ENCODE measurements at regions of chrX and their contacts with region 1.

Region 1: DNA sequence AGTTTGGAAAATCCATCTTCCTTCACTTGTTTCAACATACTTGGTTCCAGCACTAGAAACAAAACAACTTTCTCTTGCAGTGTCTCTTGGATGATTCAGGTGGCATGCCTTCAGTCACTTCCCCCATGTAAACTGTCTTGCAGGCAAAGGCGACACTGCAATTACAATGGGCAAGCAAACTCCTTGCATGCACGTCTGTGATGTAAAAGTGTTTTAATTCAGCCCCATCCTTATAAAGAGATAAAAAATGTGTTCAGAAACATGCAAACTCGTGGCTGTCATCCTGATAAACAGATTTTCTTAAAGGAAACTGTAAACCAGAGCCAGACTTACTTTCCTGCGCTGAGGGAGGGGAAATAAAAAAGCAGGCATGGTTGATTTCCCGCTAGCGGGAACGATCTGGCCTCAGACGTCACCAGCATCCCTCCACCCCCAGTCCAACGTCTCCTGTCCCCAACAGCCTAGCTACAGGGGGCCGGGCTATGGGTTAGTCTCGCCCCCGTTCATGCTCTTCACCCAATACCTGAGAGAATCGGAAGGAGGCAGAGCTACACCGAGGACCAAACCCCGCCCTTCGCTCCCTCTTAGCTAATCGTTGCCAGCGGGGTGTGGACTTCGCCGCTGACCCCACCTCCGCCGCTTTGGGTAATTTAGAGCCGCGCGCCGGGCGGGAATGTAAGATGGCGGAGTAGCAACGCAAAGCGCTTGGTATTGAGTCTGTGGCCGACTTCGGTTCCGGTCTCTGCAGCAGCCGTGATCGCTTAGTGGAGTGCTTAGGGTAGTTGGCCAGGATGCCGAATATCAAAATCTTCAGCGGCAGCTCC is at the start of gene PRPS1:
- DNase-seq: peak; percentile 87
- ATAC-seq: peak; percentile 98
- H3K4me3 ChIP-seq: peak within 1 kb of the TSS; percentile 90 to 97
- H3K27ac ChIP-seq: peak within 1 kb of the TSS; percentile 93
- H3K4me1 ChIP-seq: peaks cover 33% of the 10 kb centered on the region
- H3K27me3 ChIP-seq: no peaks in the 10 kb centered on the region
- CTCF ChIP-seq: no peak
- total RNA-seq, gene PRPS1: 152 TPM

Region 2: GRCh38 chrX:107025545-107025944 is 602.5 kb before region 1 on chrX:
- CTCF ChIA-PET with region 1: no interaction called
- POLR2A ChIA-PET with region 1: no interaction called
- in situ Hi-C with region 1: no loop called
- intact Hi-C with region 1: loop called (anchors 10 kb)
- DNase-seq: peak; percentile 28
- ATAC-seq: peak; percentile 83
- H3K4me3 ChIP-seq: no peak overlapping the region
- H3K27ac ChIP-seq: no peak overlapping the region
- H3K4me1 ChIP-seq: no peaks in the 10 kb centered on the region
- H3K27me3 ChIP-seq: no peaks in the 10 kb centered on the region
- CTCF ChIP-seq: peak; percentile 75

Region 3: GRCh38 chrX:107199491-107199890 is 428.6 kb before region 1 on chrX:
- CTCF ChIA-PET with region 1: no interaction called
- POLR2A ChIA-PET with region 1: no interaction called
- in situ Hi-C with region 1: no loop called
- intact Hi-C with region 1: no loop called
- DNase-seq: no peak
- ATAC-seq: no peak
- H3K4me3 ChIP-seq: no peak overlapping the region
- H3K27ac ChIP-seq: no peak overlapping the region
- H3K4me1 ChIP-seq: no peaks in the 10 kb centered on the region
- H3K27me3 ChIP-seq: no peaks in the 10 kb centered on the region
- CTCF ChIP-seq: no peak

Region 4: DNA sequence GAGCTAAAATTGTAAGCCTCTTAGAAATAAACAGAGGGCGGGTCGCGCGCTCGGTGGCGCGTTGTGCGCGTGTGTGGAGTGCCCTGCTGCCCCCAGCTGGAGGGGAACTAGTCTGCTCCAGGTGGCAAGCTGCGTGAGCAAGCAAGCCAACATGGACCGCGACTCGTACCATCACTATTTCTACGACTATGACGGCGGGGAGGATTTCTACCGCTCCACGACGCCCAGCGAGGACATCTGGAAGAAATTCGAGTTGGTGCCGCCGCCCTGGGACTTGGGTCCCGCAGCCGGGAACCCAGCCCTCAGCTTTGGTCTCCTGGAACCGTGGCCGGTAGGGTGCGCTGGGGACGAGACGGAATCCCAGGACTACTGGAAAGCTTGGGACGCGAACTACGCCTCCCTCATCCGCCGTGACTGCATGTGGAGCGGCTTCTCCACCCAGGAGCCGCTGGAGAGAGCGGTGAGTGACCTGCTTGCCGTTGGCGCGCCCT is 355.6 kb before region 1 on chrX:
- CTCF ChIA-PET with region 1: no interaction called
- POLR2A ChIA-PET with region 1: interaction called, 12 read pairs
- in situ Hi-C with region 1: no loop called
- intact Hi-C with region 1: no loop called
- DNase-seq: no peak
- ATAC-seq: peak; percentile 90
- H3K4me3 ChIP-seq: peak overlapping the region; percentile 16 to 42
- H3K27ac ChIP-seq: no peak overlapping the region
- H3K4me1 ChIP-seq: no peaks in the 10 kb centered on the region
- H3K27me3 ChIP-seq: no peaks in the 10 kb centered on the region
- CTCF ChIP-seq: peak; percentile 74

Region 5: DNA sequence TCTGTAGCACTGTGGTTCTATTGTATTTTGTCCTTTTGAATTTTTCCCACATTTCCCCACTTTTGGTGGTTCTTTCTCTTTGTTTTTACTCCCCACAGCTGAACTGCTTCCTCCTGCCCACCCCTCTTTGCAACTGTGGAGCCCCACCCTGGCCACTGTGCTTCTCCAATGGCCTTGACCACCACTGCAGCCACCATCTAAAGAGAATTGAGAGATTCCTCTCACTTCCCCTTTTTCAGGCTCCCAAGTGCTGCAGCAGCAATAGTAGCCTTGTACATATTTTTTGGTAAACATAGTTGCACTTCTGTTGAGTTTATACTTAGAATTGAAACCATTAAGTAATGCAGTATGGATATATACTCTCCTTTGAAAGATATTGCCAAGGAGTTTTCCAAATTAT is 229.9 kb before region 1 on chrX:
- CTCF ChIA-PET with region 1: no interaction called
- POLR2A ChIA-PET with region 1: interaction called, 13 read pairs
- in situ Hi-C with region 1: no loop called
- intact Hi-C with region 1: no loop called
- DNase-seq: no peak
- ATAC-seq: no peak
- H3K4me3 ChIP-seq: no peak overlapping the region
- H3K27ac ChIP-seq: no peak overlapping the region
- H3K4me1 ChIP-seq: no peaks in the 10 kb centered on the region
- H3K27me3 ChIP-seq: no peaks in the 10 kb centered on the region
- CTCF ChIP-seq: no peak

Region 6: DNA sequence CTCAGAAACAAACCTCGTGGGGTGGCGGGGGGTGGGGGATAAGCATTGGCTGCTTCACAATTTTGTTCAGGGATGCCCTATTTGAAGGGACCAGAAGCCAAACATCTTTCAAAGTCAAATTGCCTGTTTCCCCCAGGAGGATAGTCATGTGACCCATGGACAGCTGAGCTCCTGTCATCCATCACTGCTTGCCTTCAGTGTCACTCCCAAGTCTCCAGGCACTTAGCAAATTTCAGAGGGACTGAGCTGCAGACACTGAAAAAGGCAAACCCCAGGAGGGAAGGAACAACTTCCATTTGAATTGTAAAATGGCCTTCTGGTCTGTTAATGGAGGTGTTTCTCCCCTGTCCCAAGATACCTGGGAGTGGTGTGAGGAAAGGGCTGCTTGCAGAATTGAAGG is 105.1 kb before region 1 on chrX:
- CTCF ChIA-PET with region 1: no interaction called
- POLR2A ChIA-PET with region 1: no interaction called
- in situ Hi-C with region 1: no loop called
- intact Hi-C with region 1: no loop called
- DNase-seq: no peak
- ATAC-seq: no peak
- H3K4me3 ChIP-seq: no peak overlapping the region
- H3K27ac ChIP-seq: no peak overlapping the region
- H3K4me1 ChIP-seq: no peaks in the 10 kb centered on the region
- H3K27me3 ChIP-seq: no peaks in the 10 kb centered on the region
- CTCF ChIP-seq: no peak

Region 7: DNA sequence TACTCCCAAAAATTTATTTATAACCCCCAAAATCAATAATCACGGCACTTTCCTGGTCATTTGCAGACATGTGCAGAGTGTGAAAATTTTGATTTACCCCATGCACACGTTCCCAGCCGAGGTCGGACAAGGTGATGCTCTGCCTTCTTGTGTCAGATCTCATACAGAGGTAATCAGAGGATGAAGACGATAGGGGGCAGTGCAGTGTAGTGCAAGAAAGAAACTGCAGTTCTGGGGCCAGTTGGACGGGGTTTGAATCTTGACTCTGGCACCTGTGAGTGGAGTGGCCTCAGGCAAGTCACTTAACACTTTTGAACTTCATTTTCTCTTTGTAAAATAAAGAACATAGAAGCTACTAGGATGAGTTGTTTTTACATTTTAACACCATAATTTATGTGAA is 90.2 kb before region 1 on chrX:
- CTCF ChIA-PET with region 1: interaction called, 9 read pairs
- POLR2A ChIA-PET with region 1: interaction called, 6 read pairs
- in situ Hi-C with region 1: no loop called
- intact Hi-C with region 1: loop called (anchors 5 kb)
- DNase-seq: peak; percentile 41
- ATAC-seq: peak; percentile 89
- H3K4me3 ChIP-seq: no peak overlapping the region
- H3K27ac ChIP-seq: no peak overlapping the region
- H3K4me1 ChIP-seq: no peaks in the 10 kb centered on the region
- H3K27me3 ChIP-seq: no peaks in the 10 kb centered on the region
- CTCF ChIP-seq: peak; percentile 81